Activated naive CD4-positive, alpha-beta T cell treated with anti-CD3 and anti-CD28 coated beads for 36 hours (primary cell): ENCODE measurements at regions of chr5 and their contacts with region 1.

Region 1: DNA sequence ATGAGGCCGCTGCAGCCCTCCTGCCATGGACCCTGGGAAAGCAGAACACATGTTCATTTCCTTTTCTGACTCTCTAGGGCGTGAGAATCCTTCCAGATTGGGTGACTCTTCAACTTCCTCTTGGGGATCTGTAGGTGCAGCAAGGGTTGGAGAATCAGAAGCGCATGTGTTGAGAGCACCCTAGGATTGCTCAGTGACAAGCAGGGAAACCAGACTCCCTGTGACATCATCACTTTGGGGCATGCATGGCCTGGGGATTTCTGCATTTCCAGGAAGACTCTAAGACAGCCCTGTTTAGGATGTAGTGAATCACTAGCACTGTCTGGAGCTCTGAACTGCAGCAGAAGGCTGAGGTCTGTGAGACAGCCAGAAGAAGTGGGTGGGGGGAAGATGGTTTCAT is 15.1 kb upstream of the LCP2 start:
- DNase-seq: peak; percentile 90
- H3K4me3 Mint-ChIP-seq: peak overlapping the region; percentile 90
- H3K27ac Mint-ChIP-seq: peak overlapping the region; percentile 94
- H3K4me1 Mint-ChIP-seq: peaks cover 68% of the 10 kb centered on the region
- H3K27me3 Mint-ChIP-seq: no peaks in the 10 kb centered on the region

Region 2: DNA sequence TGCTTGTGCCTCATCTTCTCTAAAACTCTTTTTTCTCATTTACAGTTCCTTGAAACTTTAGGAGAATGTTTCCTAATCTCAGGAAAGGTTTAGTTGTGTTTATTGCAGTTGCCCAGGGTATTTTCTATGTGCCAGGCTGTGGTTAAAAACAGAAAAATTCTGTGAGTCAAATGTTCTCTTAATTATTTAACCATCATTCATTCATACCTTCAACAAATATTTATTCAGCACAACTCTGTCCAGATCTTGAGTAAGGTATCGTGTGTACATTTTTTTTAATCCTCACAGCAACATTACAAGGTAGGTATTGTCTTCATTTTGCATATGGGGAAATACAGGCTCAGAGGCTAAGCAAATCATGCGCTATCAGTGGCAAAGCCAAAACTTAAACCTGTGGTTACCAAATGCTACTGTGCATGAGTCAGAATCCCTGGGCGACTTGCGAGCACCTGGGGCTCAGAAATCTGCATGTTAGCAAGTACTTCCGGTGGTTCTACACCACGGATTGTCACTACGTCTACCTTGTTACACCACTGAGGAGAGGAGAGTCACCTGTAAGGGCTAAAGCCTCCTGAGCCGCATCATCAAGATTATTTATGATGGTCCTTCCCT is 58.7 kb before region 1 on chr5:
- CTCF ChIA-PET with region 1: no interaction called
- intact Hi-C with region 1: loop called (anchors 1 kb)
- DNase-seq: peak; percentile 86
- H3K4me3 Mint-ChIP-seq: no peak overlapping the region
- H3K27ac Mint-ChIP-seq: peak overlapping the region; percentile 83
- H3K4me1 Mint-ChIP-seq: peaks cover 62% of the 10 kb centered on the region
- H3K27me3 Mint-ChIP-seq: no peaks in the 10 kb centered on the region

Region 3: DNA sequence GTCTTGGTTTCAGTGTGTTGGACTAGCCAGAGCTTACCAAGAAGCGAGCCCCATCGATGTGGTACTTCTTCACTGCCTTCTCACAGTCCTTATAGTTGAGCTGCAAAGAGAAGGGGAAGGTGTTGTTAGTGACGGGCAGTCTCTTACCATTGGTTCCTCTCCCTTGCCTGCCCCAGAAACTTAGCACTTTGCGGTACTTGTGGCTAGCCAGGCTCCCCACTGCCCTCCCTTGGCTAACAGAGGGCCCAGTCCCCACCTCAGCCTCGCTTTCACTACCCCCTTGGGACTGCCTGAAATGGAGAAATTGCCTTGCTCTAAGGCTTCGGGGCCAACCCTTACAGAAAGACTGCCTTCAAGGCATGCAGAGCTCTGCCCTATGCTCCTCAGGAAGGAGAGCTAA is 19.4 kb before region 1 on chr5:
- CTCF ChIA-PET with region 1: interaction called, 9 read pairs
- intact Hi-C with region 1: loop called (anchors 1 kb)
- DNase-seq: peak; percentile 66
- H3K4me3 Mint-ChIP-seq: peak overlapping the region; percentile 95
- H3K27ac Mint-ChIP-seq: peak overlapping the region; percentile 98
- H3K4me1 Mint-ChIP-seq: peaks cover 69% of the 10 kb centered on the region
- H3K27me3 Mint-ChIP-seq: no peaks in the 10 kb centered on the region

Region 4: GRCh38 chr5:170327168-170327567 is 14.5 kb after region 1 on chr5:
- CTCF ChIA-PET with region 1: interaction called, 10 read pairs
- intact Hi-C with region 1: loop called (anchors 1 kb)
- DNase-seq: no peak
- H3K4me3 Mint-ChIP-seq: no peak overlapping the region
- H3K27ac Mint-ChIP-seq: no peak overlapping the region
- H3K4me1 Mint-ChIP-seq: peaks cover 19% of the 10 kb centered on the region
- H3K27me3 Mint-ChIP-seq: no peaks in the 10 kb centered on the region

Region 5: DNA sequence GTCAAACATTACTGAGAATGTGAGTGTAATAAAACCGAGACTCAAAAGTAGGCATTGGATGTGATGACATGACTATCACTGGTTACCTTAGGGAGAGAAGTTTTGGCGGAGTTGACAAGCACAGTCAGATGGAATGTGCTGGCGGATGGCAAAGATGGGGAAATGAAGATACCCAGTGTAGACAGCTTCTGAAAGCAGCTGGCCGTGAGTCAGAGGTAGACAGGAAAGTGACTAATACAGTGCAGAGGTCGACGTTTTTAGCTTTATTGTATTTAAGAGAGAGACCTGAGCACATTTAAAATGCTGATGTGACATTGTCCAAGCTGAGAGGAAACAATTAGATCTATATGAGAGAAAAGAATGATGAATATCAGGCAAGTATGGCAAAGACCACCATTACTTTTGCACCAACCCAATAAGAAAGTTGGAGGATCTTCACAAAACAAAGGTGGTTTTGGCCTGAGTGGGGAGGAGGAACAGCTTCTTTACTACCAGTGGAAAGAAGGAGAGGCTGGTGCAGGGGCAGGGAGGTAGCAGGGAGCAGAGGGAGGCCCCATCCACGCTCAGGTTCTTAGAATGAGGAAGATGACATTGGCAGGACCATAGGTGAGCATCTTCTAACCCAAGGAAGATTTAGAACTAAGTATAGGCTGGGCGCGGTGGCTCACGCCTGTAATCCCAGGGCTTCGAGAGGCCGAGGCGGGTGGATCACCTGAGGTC is 154.5 kb after region 1 on chr5:
- CTCF ChIA-PET with region 1: no interaction called
- intact Hi-C with region 1: no loop called
- DNase-seq: peak; percentile 77
- H3K4me3 Mint-ChIP-seq: no peak overlapping the region
- H3K27ac Mint-ChIP-seq: no peak overlapping the region
- H3K4me1 Mint-ChIP-seq: no peaks in the 10 kb centered on the region
- H3K27me3 Mint-ChIP-seq: peaks cover 12% of the 10 kb centered on the region